BJ (cell line): ENCODE measurements at regions of chr3 and their contacts with region 1.

Region 1: GRCh38 chr3:72462595-72463011 is 385.6 kb downstream of the SHQ1 start:
- DNase-seq: no peak
- H3K4me3 ChIP-seq: no peak overlapping the region
- H3K27me3 ChIP-seq: peaks cover 22% of the 10 kb centered on the region
- CTCF ChIP-seq: no peak

Region 2: DNA sequence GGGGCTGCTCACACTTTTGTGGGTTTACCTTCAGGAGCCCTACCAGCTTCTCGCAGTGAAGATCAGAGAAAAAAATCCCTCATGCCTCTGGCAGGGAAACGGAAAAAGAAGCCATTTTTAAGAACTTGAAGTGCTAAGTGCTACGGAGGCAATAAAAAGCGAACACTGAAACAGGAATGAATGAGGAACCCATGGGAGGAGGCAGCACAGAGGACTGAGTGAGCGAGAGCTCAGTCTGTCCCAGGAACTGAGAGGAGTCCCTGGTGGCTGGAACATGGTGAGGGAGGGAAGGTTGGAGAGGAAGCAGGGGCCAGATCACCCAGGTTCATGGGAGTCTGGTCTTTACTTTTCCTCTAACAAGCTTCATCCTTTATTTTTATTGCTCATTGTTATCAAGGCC is 449.5 kb before region 1 on chr3:
- CTCF ChIA-PET with region 1: no interaction called
- POLR2A ChIA-PET with region 1: interaction called, 15 read pairs
- DNase-seq: no peak
- H3K4me3 ChIP-seq: no peak overlapping the region
- H3K27me3 ChIP-seq: no peaks in the 10 kb centered on the region
- CTCF ChIP-seq: no peak

Region 3: DNA sequence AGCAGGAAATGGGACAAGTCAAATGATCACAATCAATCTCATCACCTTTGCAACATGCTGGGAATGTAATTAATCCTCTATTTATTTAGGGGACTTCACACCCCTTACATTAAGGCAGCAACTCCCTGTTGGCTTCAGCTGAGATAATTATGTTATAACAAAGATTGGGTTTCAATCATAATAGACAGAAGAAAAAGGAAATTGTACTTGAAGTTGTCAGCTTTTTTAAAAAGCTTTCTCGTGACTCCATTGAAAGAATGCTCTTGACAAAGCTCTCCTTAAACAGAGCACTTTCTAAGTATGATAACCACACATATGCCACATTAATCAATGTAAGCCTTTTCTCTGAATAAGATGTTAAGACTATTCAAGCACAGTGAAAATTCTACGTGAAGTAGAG is 319.9 kb after region 1 on chr3:
- CTCF ChIA-PET with region 1: no interaction called
- POLR2A ChIA-PET with region 1: no interaction called
- DNase-seq: no peak
- H3K4me3 ChIP-seq: no peak overlapping the region
- H3K27me3 ChIP-seq: no peaks in the 10 kb centered on the region
- CTCF ChIP-seq: no peak